Activated T-helper 1 cell treated with anti-CD3 and anti-CD28 coated beads, Interleukin-12 subunit alpha, Interleukin-12 subunit beta, Interleukin-2, Interleukin-4 antibody, amounts not matched to agents 30 ng/mL and 10 ng/mL and 1 ng/mL, durations not matched to agents 14 hours and 24 hours and 36 hours (primary cell): ENCODE measurements at regions of chr17 and their contacts with region 1.

Region 1: DNA sequence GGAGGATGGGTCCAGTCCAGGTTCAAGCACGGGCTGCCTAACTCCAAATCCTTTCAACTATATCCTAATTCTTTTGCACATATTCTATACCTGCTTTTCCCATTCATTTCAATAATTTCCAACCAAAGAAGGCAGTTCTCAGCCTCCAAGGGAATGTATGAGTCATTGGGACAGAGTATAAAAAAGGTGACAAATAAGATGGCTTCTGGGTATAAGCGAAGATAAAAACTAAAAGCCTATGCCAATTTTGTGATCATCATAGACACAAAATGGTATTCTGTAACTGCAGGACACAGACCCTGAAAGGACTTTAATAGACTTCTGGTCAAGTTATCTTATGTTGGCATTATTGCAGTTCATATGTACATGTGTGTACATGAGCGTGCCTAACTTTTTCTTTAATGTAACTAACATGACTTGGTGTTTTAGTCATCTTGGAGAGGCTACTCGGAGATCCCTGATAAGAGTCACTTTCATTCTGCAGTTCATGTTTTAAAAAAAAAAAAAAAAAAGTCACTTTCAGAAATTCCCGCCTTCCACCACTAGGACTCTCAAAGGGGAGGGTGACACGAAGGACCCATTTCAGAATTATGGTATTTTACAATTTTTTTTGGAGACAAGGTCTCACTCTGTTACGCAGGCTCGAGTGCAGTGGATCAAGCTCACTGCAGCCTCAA is 17.3 kb downstream of the COG1 start:
- DNase-seq: no peak
- H3K4me3 Mint-ChIP-seq: no peak overlapping the region
- H3K27ac Mint-ChIP-seq: peak overlapping the region; percentile 67
- H3K4me1 Mint-ChIP-seq: peaks cover 33% of the 10 kb centered on the region
- H3K27me3 Mint-ChIP-seq: no peaks in the 10 kb centered on the region

Region 2: DNA sequence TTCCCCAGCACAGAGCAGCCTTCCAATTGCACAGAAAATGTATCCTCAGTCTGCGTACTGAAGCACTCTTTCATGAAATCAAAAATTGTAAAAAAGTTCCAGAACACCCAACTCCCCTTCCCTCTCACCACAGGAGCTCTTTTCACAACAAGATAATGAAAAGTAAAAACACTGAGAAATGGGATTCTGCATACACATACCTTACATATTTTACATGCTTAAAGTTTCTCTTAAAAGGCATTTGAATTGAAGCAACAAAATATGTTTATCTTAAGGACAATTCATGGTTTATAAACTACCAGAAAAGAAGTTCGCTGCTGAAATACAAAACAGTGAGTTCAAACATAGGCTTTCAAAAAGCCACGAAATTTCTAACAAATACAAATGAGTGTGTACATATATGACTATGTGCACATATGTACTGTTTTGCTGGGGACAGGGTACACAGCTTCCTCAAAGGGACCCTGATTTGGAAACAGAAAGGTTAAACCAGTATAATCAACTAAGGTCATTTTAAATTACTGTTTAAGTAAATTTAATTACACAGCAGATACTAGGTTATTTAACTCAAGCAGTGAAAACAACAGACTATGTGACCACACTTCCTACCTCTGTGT is 16.5 kb after region 1 on chr17:
- intact Hi-C with region 1: loop called (anchors 2 kb)
- DNase-seq: no peak
- H3K4me3 Mint-ChIP-seq: peak overlapping the region; percentile 64
- H3K27ac Mint-ChIP-seq: peak overlapping the region; percentile 70
- H3K4me1 Mint-ChIP-seq: peaks cover 65% of the 10 kb centered on the region
- H3K27me3 Mint-ChIP-seq: no peaks in the 10 kb centered on the region